ENCODE measurements at regions of chr20 and their contacts with region 1.

Region 1: GRCh38 chr20:4082406-4083097 is 67.2 kb upstream of the RNF24 start:
- DNase-seq: peak in 1 of 2 donors; percentile 79
- H3K4me3 ChIP-seq: no peak overlapping the region
- H3K27ac ChIP-seq: peak overlapping the region; percentile 77 to 88
- H3K4me1 ChIP-seq: peaks cover 13 to 37% of the 10 kb centered on the region in 2 donors
- H3K27me3 ChIP-seq: no peaks in the 10 kb centered on the region
- CTCF ChIP-seq: no peak

Region 2: GRCh38 chr20:3970016-3970415 is 112.5 kb before region 1 on chr20:
- intact Hi-C with region 1: no loop called
- DNase-seq: no peak
- H3K4me3 ChIP-seq: no peak overlapping the region
- H3K27ac ChIP-seq: no peak overlapping the region
- H3K4me1 ChIP-seq: no peaks in the 10 kb centered on the region
- H3K27me3 ChIP-seq: no peaks in the 10 kb centered on the region
- CTCF ChIP-seq: no peak

Region 3: GRCh38 chr20:4014031-4014474 is 68.5 kb before region 1 on chr20:
- intact Hi-C with region 1: loop called (anchors 1 kb)
- DNase-seq: peak in 1 of 2 donors; percentile 78
- H3K4me3 ChIP-seq: peak overlapping the region; percentile 91
- H3K27ac ChIP-seq: peak overlapping the region; percentile 91 to 95
- H3K4me1 ChIP-seq: peaks cover 6 to 12% of the 10 kb centered on the region in 2 donors
- H3K27me3 ChIP-seq: no peaks in the 10 kb centered on the region
- CTCF ChIP-seq: peak; percentile 43 to 54 (median 43)

Region 4: DNA sequence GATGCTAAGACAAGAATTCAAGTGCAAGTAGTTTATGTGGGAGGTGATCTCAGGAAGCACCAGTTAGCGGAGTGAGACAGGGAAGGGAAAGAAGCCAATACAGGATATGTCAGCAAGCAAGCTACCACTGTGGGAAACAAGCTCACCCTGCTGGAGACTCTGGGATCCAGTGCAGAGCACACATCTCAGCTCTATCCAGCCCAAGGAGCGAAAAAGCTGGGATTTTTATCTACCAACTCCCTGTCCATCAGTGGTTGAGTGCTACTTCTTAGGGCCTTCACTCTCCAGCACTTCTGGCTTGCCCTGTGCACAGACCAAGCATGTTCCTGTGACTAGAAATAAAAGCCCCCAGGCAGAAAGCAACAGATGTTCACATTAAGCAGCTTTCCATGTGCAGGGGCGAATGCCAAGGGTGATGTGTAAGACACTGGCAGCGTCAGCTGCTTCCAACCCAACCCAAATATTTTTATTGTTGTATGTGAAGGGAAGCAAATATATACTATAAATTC is 56.4 kb before region 1 on chr20:
- intact Hi-C with region 1: no loop called
- DNase-seq: peak in 1 of 2 donors; percentile 70
- H3K4me3 ChIP-seq: no peak overlapping the region
- H3K27ac ChIP-seq: peak overlapping the region; percentile 39 to 56
- H3K4me1 ChIP-seq: peaks cover 0 to 21% of the 10 kb centered on the region in 2 donors
- H3K27me3 ChIP-seq: no peaks in the 10 kb centered on the region
- CTCF ChIP-seq: peak in 2 of 3 experiments; percentile 42 to 53

Region 5: GRCh38 chr20:4064144-4064909 is 18.2 kb before region 1 on chr20:
- intact Hi-C with region 1: loop called (anchors 1 kb)
- DNase-seq: peak; percentile 87 to 98
- H3K4me3 ChIP-seq: no peak overlapping the region
- H3K27ac ChIP-seq: peak overlapping the region; percentile 93 to 94
- H3K4me1 ChIP-seq: peaks cover 23 to 64% of the 10 kb centered on the region in 2 donors
- H3K27me3 ChIP-seq: no peaks in the 10 kb centered on the region
- CTCF ChIP-seq: peak in 1 of 3 experiments; percentile 23

Measured in ascending aorta (tissue), 2 donors.